ENCODE measurements at regions of chr1 and their contacts with region 1.

Region 1: DNA sequence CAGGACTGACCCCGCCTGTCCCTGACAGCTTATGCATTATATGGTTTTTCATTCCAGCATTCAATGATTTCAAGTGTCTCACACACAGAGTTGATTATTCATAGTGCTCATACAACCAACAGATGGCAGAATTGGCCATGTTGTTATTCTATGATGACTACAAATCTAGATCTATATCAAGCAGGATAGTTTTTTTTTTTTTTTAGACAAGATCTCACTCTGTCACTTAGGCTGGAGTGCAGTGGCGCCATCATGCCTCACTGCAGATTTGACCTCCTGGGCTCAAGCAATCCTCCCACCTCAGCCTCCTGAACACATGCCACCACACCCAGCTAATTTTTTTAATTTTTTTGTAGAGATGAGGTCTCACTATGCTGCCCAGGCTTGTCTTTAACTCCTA is 40.1 kb upstream of the LRRC8D start:
- DNase-seq: peak; percentile 61
- H3K4me3 ChIP-seq: no peak overlapping the region
- H3K27ac ChIP-seq: no peak overlapping the region
- H3K4me1 ChIP-seq: no peaks in the 10 kb centered on the region
- H3K27me3 ChIP-seq: peaks cover 0 to 5% of the 10 kb centered on the region in 2 experiments
- CTCF ChIP-seq: peak; percentile 18 to 23
- POLR2A ChIP-seq: no peak

Region 2: GRCh38 chr1:89791064-89791726 is 10.5 kb after region 1 on chr1:
- CTCF ChIA-PET with region 1: interaction called, 14 read pairs
- POLR2A ChIA-PET with region 1: no interaction called
- dilution Hi-C with region 1: no loop called
- intact Hi-C with region 1: no loop called
- DNase-seq: no peak
- H3K4me3 ChIP-seq: no peak overlapping the region
- H3K27ac ChIP-seq: no peak overlapping the region
- H3K4me1 ChIP-seq: no peaks in the 10 kb centered on the region
- H3K27me3 ChIP-seq: no peaks in the 10 kb centered on the region
- CTCF ChIP-seq: no peak
- POLR2A ChIP-seq: no peak

Region 3: DNA sequence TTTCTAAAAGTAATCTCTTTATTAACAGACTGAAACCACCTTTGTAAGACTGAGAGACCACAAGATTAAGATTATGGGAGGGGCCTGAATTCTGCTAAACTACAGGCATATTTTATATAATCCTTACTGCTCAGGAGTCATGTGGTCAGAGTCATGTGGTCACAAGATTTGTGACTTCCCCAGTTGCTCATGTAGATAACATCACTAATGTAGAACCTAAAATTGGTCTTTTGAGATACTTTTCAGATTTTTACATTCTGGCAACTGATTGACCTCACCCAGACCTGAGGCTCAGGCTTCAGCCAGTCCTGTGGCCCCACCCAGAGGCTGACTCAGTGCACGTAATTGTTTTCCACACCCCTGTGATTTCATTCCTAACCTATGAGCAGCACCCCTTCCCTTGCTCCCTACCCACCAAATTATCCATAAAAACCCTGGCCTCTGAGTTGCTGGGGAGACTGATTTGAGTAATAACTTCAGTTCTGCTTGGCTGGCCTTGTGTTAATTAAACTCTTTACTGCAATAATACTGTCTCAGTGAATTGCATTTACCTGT is 172.4 kb after region 1 on chr1:
- CTCF ChIA-PET with region 1: interaction called, 3 read pairs
- POLR2A ChIA-PET with region 1: no interaction called
- dilution Hi-C with region 1: no loop called
- intact Hi-C with region 1: loop called (anchors 1 kb)
- DNase-seq: peak; percentile 42
- H3K4me3 ChIP-seq: no peak overlapping the region
- H3K27ac ChIP-seq: no peak overlapping the region
- H3K4me1 ChIP-seq: peaks cover 5% of the 10 kb centered on the region
- H3K27me3 ChIP-seq: no peaks in the 10 kb centered on the region
- CTCF ChIP-seq: peak; percentile 24 to 29
- POLR2A ChIP-seq: no peak

Region 4: DNA sequence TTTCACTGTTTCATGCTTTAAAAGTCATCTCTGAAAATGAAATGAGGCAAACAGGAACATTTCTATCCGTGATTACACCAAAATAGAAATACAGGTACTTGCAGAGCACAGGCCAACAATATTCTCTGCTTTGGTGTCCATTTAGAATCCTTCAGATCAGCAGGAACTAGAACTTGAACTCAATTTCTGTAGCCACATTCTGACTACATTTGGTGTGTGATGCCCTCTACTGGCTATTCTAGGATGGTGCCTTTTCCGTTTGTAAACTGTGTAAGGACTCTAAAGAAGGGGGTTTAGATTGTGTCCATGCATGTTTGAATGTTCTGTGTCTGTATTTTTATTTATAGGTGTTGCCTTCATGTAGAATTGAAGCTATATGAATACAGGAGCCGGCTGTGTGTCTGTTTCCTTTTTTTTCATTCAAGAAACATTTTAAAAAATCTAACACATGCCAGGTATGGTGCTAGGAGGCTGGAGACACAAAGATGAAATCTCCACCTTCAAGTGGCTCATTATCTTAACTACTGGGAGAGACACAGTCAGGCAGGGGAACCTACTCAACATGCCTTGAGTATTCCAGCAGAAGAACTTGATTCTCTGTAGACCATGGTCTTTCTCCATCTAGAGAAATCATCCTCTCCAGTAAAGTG is 206.6 kb after region 1 on chr1:
- CTCF ChIA-PET with region 1: interaction called, 32 read pairs
- POLR2A ChIA-PET with region 1: interaction called, 4 read pairs
- dilution Hi-C with region 1: no loop called
- intact Hi-C with region 1: loop called (anchors 1 kb)
- DNase-seq: peak; percentile 82
- H3K4me3 ChIP-seq: no peak overlapping the region
- H3K27ac ChIP-seq: no peak overlapping the region
- H3K4me1 ChIP-seq: no peaks in the 10 kb centered on the region
- H3K27me3 ChIP-seq: peaks cover 0 to 2% of the 10 kb centered on the region in 2 experiments
- CTCF ChIP-seq: peak; percentile 66 to 68
- POLR2A ChIP-seq: no peak